AG04449 (cell line): ENCODE measurements at regions of chr4 and their contacts with region 1.

Region 1: DNA sequence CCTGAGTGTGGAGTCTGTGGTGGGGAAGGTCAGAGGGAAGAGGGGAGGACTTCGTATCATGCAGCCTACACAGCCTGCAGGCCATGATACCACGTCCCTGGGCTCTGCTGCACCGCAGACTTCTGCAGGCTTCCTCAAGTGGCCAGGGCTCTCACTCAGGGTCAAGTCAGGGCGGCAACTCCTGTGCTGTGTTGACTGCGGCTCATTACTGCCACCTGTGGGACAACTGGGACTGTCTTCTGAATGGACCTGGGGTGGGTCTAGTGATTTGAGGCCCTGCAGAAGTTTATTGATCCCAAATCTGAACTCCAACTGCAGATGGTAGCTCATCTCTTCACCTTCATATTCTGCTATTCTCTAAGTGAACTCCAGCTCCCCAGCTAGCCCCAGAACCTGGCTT is 167.1 kb downstream of the NSUN7 start:
- DNase-seq: no peak
- H3K4me3 ChIP-seq: no peak overlapping the region
- CTCF ChIP-seq: no peak

Region 2: GRCh38 chr4:40736910-40737309 is 180.0 kb before region 1 on chr4:
- CTCF ChIA-PET with region 1: interaction called, 10 read pairs
- POLR2A ChIA-PET with region 1: no interaction called
- DNase-seq: no peak
- H3K4me3 ChIP-seq: no peak overlapping the region
- CTCF ChIP-seq: peak; percentile 11

Region 3: DNA sequence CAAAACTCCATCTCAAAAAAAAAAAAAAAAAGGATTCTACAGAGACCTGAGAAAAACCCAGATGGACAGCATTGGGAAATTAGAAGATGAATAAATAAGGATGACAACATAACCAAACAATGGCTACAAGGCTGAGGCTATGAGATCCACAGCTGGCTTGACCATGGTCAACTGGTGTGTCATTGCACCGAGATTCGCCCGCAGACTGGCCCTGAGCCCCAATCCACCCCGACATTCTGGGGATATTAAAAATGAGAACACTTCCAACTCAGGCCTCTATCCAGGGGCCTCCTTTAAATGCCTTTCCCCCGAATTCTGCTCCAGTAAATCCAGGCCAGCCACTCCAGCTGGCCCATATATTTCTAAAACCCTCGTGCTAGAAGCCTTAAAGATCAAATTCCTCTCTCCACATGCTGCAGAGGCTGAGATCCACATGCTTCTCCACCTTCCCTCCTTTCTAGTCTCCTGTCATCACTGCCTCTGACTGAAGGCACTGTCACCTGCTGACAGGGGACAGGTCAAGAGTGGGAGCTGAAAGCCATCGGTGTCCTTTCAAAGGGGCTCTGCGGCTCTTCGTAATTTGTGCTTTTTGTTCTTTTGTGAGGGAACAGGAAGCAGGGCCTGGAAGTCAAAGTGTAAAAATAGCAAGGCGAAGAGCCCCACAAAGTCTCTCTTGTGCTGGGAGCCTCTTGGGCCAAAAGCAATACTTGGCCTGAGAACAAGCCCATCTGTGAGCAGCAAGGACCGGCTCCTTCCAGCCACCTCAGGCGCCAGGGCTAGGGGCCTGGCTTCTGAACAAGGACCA is 36.6 kb after region 1 on chr4:
- CTCF ChIA-PET with region 1: no interaction called
- POLR2A ChIA-PET with region 1: no interaction called
- DNase-seq: no peak
- H3K4me3 ChIP-seq: no peak overlapping the region
- CTCF ChIP-seq: no peak

Region 4: GRCh38 chr4:41204400-41204978 is 287.6 kb after region 1 on chr4:
- CTCF ChIA-PET with region 1: interaction called, 336 read pairs
- POLR2A ChIA-PET with region 1: no interaction called
- DNase-seq: no peak
- H3K4me3 ChIP-seq: no peak overlapping the region
- CTCF ChIP-seq: no peak